ENCODE measurements at regions of chr19 and their contacts with region 1.

Region 1: DNA sequence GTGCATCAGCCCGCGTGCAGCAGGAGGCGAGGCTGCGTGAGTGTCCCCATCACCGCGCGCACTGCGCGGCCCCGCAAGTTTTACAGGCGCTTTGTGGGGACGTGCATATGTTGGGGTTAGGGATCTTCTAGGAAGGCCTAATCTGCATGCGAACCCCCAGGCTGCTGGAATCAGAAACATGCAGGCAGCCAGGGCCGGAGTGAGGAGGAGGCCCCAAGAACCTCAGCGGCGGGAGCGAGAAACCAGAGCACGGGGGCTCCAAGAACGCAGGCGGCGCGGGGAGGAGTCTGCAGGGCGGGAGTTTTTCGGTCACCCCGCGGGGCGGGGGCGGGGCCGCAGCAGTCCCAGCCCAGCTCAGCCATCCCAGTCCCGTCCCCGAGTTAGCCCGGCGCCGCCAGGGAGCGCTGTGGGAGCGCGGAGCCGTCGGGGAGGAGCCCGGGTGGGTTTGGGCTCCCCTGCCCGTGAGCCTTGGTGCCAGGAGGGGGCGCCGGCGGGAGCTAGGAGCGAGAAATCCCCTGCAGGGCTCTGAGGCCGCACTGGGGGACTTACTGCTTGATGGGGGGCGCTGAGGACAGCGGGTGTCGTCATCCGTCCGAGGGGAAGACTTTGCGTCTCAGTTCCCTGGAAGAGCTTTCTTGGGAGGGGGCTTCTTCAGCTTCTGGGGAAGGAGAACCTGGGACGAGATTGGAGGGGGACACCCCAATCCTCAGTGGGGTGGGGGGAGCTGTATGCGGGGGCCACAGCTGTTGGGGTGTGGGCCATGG is 933 bp upstream of the NRTN start:
- DNase-seq: peak; percentile 99
- H3K4me3 Mint-ChIP-seq: peak overlapping the region; percentile 81
- H3K27ac Mint-ChIP-seq: peak overlapping the region; percentile 70
- H3K4me1 Mint-ChIP-seq: peaks cover 18% of the 10 kb centered on the region
- H3K27me3 Mint-ChIP-seq: peaks cover 41% of the 10 kb centered on the region

Region 2: GRCh38 chr19:5827891-5828660 is 24.1 kb after region 1 on chr19:
- intact Hi-C with region 1: loop called (anchors 2 kb)
- DNase-seq: peak; percentile 99
- H3K4me3 Mint-ChIP-seq: peak overlapping the region; percentile 100
- H3K27ac Mint-ChIP-seq: peak overlapping the region; percentile 100
- H3K4me1 Mint-ChIP-seq: peaks cover 8% of the 10 kb centered on the region
- H3K27me3 Mint-ChIP-seq: no peaks in the 10 kb centered on the region

Region 3: GRCh38 chr19:5864725-5865486 is 61.0 kb after region 1 on chr19:
- intact Hi-C with region 1: no loop called
- DNase-seq: no peak
- H3K4me3 Mint-ChIP-seq: no peak overlapping the region
- H3K27ac Mint-ChIP-seq: peak overlapping the region; percentile 24
- H3K4me1 Mint-ChIP-seq: no peaks in the 10 kb centered on the region
- H3K27me3 Mint-ChIP-seq: no peaks in the 10 kb centered on the region

Region 4: GRCh38 chr19:5977785-5978605 is 174.1 kb after region 1 on chr19 and contains the start of gene RANBP3:
- intact Hi-C with region 1: loop called (anchors 5 kb)
- DNase-seq: peak; percentile 100
- H3K4me3 Mint-ChIP-seq: peak within 1 kb of the TSS; percentile 94
- H3K27ac Mint-ChIP-seq: peak within 1 kb of the TSS; percentile 93
- H3K4me1 Mint-ChIP-seq: peaks cover 55% of the 10 kb centered on the region
- H3K27me3 Mint-ChIP-seq: no peaks in the 10 kb centered on the region
- total RNA-seq, gene RANBP3: 105 and 114 TPM in 2 replicates

Region 5: DNA sequence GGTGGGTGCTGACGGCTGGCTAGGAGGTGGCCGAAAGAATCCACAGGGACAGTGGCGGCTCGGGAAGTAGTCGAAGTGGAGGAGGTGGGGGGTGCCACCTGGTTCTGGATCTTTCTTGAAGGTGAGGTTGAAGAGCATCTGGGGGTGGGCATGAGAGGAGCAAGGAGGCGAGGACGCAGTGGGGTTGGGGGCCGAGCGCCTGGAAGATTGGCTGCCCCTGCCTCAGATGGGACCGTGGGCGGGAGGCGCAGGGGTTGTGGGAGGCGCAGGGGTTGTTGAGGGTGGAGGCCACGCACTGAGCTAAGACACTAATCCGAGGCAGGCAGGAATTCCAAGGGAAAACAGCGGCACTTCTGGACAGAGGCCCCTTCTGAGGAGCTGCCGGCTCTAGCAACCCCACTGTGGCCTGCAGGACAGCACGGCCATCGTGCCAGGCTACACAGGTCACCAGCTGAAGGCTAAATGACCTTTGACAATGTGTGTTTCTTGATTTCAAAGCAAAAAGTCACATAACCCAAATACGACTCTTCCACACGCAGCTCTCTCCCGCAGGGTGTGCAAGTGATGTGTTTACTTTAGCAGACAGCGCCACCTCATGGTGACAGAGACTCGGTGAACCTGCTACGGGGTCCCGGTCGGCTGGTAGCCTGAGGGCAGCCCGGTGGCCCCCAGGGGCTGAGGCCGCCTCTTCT is 218.1 kb after region 1 on chr19:
- intact Hi-C with region 1: loop called (anchors 1 kb)
- DNase-seq: peak; percentile 94
- H3K4me3 Mint-ChIP-seq: no peak overlapping the region
- H3K27ac Mint-ChIP-seq: no peak overlapping the region
- H3K4me1 Mint-ChIP-seq: no peaks in the 10 kb centered on the region
- H3K27me3 Mint-ChIP-seq: no peaks in the 10 kb centered on the region

Measured in activated CD4-positive, alpha-beta T cell treated with anti-CD3 and anti-CD28 coated beads, Interleukin-2, amount 10 ng/mL, durations not matched to agents 24 days and 14 days (primary cell).